ENCODE measurements at regions of chr10 and their contacts with region 1.

Region 1: GRCh38 chr10:62038609-62039190 is 137.2 kb downstream of the ARID5B start:
- DNase-seq: peak; percentile 84

Region 2: GRCh38 chr10:61750929-61751471 is 287.7 kb before region 1 on chr10:
- intact Hi-C with region 1: loop called (anchors 10 kb)
- DNase-seq: peak; percentile 76

Region 3: DNA sequence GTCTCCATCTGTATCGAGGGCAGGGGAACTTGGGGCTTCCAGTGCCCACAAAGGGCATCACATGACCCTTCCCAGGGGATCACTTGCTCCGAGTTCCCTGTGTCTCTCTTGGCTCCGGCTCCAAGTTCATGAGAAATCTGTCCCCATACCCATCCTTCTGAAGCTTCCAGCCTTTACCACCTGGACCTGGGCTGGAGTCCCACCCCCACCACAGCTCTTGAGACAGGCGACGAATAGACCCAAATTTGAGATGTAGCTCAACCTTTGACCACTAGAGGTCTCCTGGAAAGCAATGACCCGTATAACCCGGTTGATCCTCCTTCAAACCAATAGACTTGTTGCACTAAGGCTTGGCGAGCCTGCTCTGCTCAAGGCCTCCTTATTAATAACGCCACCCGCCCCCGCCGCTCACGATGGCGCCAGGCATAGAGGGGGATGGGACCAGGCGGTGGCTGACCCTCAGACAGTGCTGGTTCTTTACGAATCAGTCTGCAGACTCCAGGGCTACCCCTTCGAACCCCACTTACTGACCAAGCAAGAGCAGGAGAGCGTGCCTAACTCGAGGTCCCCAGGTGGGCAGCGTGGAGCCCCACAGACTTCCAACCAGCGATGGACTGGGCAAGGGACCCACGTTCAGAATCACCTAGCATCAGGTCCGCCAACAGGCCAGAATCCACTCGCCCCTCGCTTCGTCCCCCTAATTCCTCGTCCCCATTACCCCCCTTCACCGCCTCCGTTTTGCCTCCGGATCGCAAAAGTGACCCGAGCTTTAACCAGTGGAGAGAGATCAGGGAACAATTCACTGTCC is 141.6 kb before region 1 on chr10:
- intact Hi-C with region 1: loop called (anchors 2 kb)
- DNase-seq: no peak

Region 4: GRCh38 chr10:62205750-62206399 is 167.2 kb after region 1 on chr10:
- intact Hi-C with region 1: no loop called
- DNase-seq: no peak

Region 5: DNA sequence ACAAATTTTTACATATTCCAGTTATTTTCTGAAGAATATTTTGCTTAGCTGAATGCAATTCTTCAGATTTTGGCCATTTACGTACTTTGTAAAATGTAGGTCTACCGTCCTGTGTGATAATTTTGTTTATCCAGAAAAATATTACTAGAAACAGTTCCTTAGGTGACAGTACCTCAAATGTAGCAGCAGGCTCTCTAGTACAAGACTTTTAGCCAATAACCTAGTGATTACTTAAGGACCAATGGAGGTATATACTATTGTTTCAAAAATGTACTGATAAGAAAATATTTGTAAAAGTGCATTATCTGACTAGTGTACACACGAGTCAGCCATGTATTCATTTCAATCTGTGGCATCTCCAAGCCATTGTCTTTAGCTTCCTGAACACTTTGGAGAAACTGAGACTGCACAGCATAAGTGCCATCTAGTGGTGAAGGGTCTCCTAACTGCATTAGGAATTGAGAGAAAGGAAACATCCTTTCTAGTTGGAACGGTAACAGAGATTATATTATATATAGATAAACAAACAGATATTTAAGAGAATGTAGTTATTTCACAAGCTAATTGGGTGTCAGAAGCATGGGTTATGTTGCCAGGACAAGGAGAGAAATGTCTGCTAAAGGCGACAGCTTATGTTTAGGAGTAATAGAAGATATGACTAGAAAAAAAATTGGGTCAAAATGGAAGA is 206.2 kb after region 1 on chr10:
- intact Hi-C with region 1: loop called (anchors 1 kb)
- DNase-seq: no peak